GM12878 (cell line): ENCODE measurements at regions of chr4 and their contacts with region 1.

Region 1: DNA sequence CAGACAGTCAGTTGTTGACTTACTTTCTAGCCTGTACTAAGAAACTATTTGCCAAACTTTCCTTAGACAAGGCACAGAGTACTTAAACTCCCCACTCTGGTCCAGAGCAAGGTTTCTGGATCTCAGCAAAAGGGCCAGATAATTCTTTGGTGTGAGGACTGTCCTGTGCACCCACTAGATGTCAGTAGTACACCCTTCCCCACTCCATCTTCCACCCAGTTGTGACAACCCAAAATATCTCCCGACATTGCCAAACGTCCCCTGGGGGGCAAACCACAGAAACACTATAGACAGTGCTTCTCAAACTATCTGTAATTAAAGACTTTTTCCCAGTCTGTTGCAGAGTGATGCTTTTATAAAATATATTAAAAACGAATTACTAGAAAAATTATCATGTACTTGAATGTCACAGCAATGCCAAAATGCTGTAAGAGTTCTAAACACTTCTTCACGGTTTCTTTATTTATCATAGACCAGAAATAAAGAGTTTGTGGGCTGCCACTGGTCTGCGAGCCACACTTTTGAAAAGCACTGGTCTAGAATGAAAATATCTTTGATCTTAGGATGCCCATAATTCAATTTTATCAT is 203.5 kb downstream of the PRDM5 start:
- DNase-seq: no peak
- ATAC-seq: peak; percentile 89
- H3K4me3 ChIP-seq: no peak overlapping the region
- H3K27ac ChIP-seq: no peak overlapping the region
- H3K4me1 ChIP-seq: no peaks in the 10 kb centered on the region
- H3K27me3 ChIP-seq: peaks cover 0 to under 1% of the 10 kb centered on the region in 2 experiments; a peak in 1 of 4 replicates
- CTCF ChIP-seq: peak; percentile 53 to 66 (median 59); a peak in 5 of 6 replicates
- EP300 ChIP-seq: no peak
- POLR2A ChIP-seq: no peak
- RAD21 ChIP-seq: peak; percentile 61

Region 2: GRCh38 chr4:120156120-120156718 is 562.9 kb before region 1 on chr4:
- CTCF ChIA-PET with region 1: no interaction called
- POLR2A ChIA-PET with region 1: no interaction called
- RAD21 ChIA-PET with region 1: no interaction called
- SMC1A ChIA-PET with region 1: interaction called, 3 read pairs
- in situ Hi-C with region 1: no loop called
- intact Hi-C with region 1: loop called (anchors 5 kb)
- DNase-seq: peak; percentile 7
- ATAC-seq: peak; percentile 65
- H3K4me3 ChIP-seq: no peak overlapping the region
- H3K27ac ChIP-seq: no peak overlapping the region
- H3K4me1 ChIP-seq: no peaks in the 10 kb centered on the region
- H3K27me3 ChIP-seq: no peaks in the 10 kb centered on the region
- CTCF ChIP-seq: peak; percentile 39 to 61 (median 52); a peak in 5 of 6 replicates
- EP300 ChIP-seq: no peak
- POLR2A ChIP-seq: no peak
- RAD21 ChIP-seq: peak; percentile 82

Region 3: DNA sequence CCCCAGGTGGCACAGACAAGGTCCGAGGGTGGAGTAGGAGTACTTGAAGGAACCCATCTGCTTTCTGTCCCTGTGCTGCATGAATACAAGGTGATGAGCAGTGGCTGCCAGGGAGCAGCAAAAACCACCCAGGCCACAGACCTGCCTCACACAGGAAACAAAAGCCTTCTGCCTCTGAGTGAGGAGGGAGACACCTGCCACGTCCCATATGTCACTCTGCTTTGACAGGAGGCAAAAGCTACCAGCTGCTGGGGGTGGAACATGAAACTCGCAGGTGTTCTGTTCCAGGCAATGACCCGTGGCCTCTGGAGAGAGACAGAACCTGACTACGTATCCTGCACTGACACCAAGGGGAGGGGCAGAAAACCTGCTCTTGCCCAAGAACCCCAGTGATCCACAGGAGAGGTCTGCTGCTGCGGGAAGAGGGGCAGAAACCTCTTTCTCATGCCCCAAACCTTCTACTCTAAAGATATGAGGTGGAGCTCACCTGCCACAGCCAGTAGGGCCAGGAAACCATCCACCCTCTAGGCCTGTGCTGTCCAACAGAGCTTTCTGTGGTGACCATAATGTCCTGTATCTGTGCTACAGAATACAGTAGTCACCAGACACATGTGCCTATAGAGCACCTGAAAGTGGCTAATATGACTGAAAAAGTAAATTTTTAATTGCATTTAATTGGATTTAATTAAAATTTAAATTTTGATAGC is 30.5 kb after region 1 on chr4:
- CTCF ChIA-PET with region 1: no interaction called
- POLR2A ChIA-PET with region 1: no interaction called
- RAD21 ChIA-PET with region 1: interaction called, 6 read pairs
- SMC1A ChIA-PET with region 1: interaction called, 10 read pairs
- in situ Hi-C with region 1: no loop called
- intact Hi-C with region 1: no loop called
- DNase-seq: peak; percentile 83
- ATAC-seq: peak; percentile 96
- H3K4me3 ChIP-seq: no peak overlapping the region
- H3K27ac ChIP-seq: peak overlapping the region; percentile 30; the same call in 1 of the 2 replicates
- H3K4me1 ChIP-seq: peaks cover 11% of the 10 kb centered on the region
- H3K27me3 ChIP-seq: no peaks in the 10 kb centered on the region
- CTCF ChIP-seq: no peak
- EP300 ChIP-seq: peak; percentile 29 to 74; a peak in 2 of 4 replicates
- POLR2A ChIP-seq: no peak
- RAD21 ChIP-seq: no peak; the same call in 1 of the 2 replicates

Region 4: DNA sequence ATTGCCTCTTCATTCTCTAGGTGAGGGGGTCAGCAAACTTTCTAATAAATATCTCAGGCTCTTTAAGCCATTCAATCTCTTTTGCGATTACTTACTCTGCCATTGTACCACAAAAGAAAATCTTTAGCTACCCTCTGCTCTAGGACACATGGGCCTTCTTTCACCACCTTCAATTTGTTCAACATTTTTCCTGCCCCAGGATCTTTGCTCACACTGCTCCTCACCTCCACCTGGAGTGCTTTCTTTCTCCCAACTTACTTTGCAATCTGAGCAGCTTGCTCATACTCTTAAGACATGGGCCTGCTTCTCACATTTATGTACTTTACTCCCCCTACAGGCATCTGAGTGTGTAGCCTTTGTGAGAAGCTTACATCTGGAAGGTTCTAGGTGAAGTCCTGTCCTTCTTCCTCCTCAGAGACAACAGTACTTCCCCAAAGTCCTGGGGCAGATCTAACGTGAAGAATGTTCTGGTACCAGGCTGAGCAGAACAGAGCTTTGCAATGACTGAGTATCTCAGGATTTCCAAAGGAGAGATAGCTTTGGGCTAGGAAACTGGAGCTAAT is 258.4 kb after region 1 on chr4:
- CTCF ChIA-PET with region 1: interaction called, 10 read pairs
- POLR2A ChIA-PET with region 1: no interaction called
- RAD21 ChIA-PET with region 1: interaction called, 7 read pairs
- SMC1A ChIA-PET with region 1: interaction called, 9 read pairs
- in situ Hi-C with region 1: no loop called
- intact Hi-C with region 1: loop called (anchors 1 kb)
- DNase-seq: no peak
- ATAC-seq: peak; percentile 90
- H3K4me3 ChIP-seq: no peak overlapping the region
- H3K27ac ChIP-seq: no peak overlapping the region
- H3K4me1 ChIP-seq: no peaks in the 10 kb centered on the region
- H3K27me3 ChIP-seq: no peaks in the 10 kb centered on the region
- CTCF ChIP-seq: peak; percentile 54 to 60 (median 58)
- EP300 ChIP-seq: no peak
- POLR2A ChIP-seq: no peak
- RAD21 ChIP-seq: peak; percentile 61